Activated CD4-positive, alpha-beta T cell treated with anti-CD3 and anti-CD28 coated beads for 36 hours (primary cell): ENCODE measurements at regions of chr1 and their contacts with region 1.

Region 1: GRCh38 chr1:203609979-203610493 is 16.6 kb upstream of the ATP2B4 start:
- DNase-seq: no peak
- ATAC-seq: no peak
- H3K4me3 Mint-ChIP-seq: no peak overlapping the region
- H3K27ac Mint-ChIP-seq: peak overlapping the region; percentile 7
- H3K4me1 Mint-ChIP-seq: peaks cover 46% of the 10 kb centered on the region
- H3K27me3 Mint-ChIP-seq: no peaks in the 10 kb centered on the region

Region 2: GRCh38 chr1:203512830-203513611 is 97.0 kb before region 1 on chr1:
- CTCF ChIA-PET with region 1: no interaction called
- POLR2A ChIA-PET with region 1: no interaction called
- intact Hi-C with region 1: loop called in 1 of 2 experiments (anchors 2 kb)
- DNase-seq: peak; percentile 81
- ATAC-seq: peak; percentile 88
- H3K4me3 Mint-ChIP-seq: peak overlapping the region; percentile 6
- H3K27ac Mint-ChIP-seq: peak overlapping the region; percentile 83
- H3K4me1 Mint-ChIP-seq: peaks cover 36% of the 10 kb centered on the region
- H3K27me3 Mint-ChIP-seq: no peaks in the 10 kb centered on the region